B cell (primary cell): ENCODE measurements at regions of chr1 and their contacts with region 1.

Region 1: GRCh38 chr1:26677306-26678115 is 18.3 kb upstream of the ARID1A start:
- DNase-seq: peak; percentile 76
- ATAC-seq: peak; percentile 96
- H3K4me3 ChIP-seq: peak overlapping the region in 4 of 5 experiments; percentile 13 to 31 (median 24)
- H3K4me3 Mint-ChIP-seq: peak overlapping the region; percentile 77
- H3K27ac ChIP-seq: peak overlapping the region in 1 of 2 donors; percentile 12
- H3K27ac Mint-ChIP-seq: peak overlapping the region; percentile 83
- H3K4me1 ChIP-seq: peaks cover 14 to 15% of the 10 kb centered on the region in 2 donors
- H3K4me1 Mint-ChIP-seq: peaks cover 15% of the 10 kb centered on the region
- H3K27me3 ChIP-seq: no peaks in the 10 kb centered on the region
- H3K27me3 Mint-ChIP-seq: no peaks in the 10 kb centered on the region
- CTCF ChIP-seq: peak; percentile 45

Region 2: GRCh38 chr1:26490158-26490557 is 187.4 kb before region 1 on chr1:
- CTCF ChIA-PET with region 1: no interaction called
- POLR2A ChIA-PET with region 1: no interaction called
- intact Hi-C with region 1: no loop called
- DNase-seq: no peak
- ATAC-seq: no peak
- H3K4me3 ChIP-seq: no peak overlapping the region
- H3K4me3 Mint-ChIP-seq: no peak overlapping the region
- H3K27ac ChIP-seq: no peak overlapping the region
- H3K27ac Mint-ChIP-seq: no peak overlapping the region
- H3K4me1 ChIP-seq: no peaks in the 10 kb centered on the region
- H3K4me1 Mint-ChIP-seq: peaks cover 1% of the 10 kb centered on the region
- H3K27me3 ChIP-seq: no peaks in the 10 kb centered on the region
- H3K27me3 Mint-ChIP-seq: no peaks in the 10 kb centered on the region
- CTCF ChIP-seq: no peak

Region 3: DNA sequence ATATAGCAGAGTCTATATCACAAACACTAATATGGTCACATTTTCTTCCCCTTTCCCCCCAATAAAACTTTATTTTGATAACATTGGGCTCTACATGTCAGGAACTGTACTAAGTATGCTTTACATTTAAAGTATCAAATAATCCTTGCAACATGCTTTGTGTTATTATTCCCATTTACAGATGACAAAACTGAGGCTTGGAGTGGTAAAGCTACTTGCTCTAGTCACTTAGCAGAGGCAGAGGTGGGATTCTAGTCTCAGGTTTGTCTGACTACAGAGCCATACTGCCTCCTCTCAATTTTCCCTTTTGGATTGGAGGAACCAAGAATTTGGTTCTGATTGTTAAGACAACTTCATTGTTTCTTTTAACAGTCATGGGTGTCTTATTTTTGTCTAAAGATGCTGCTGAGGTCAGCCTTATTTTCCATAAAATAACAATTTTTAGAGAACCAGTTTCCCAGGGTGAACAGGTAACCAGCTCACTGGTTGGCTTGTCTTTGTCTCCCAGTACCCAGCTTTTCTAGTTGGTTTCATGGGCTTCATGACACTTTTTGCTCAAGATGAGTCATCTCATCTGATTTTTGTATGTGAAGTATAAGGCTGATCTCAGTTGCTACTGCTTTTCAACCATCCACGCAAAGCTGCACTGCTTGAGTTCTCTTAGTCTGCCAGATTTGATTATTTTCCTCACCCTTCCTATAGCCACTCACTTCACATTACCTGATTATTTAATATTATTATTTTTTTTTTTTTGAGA is 62.7 kb before region 1 on chr1:
- CTCF ChIA-PET with region 1: interaction called, 10 read pairs
- POLR2A ChIA-PET with region 1: interaction called, 4 read pairs
- intact Hi-C with region 1: no loop called
- DNase-seq: no peak
- ATAC-seq: no peak
- H3K4me3 ChIP-seq: no peak overlapping the region
- H3K4me3 Mint-ChIP-seq: no peak overlapping the region
- H3K27ac ChIP-seq: no peak overlapping the region
- H3K27ac Mint-ChIP-seq: peak overlapping the region; percentile 32
- H3K4me1 ChIP-seq: peaks cover 16 to 18% of the 10 kb centered on the region in 2 donors
- H3K4me1 Mint-ChIP-seq: peaks cover 18% of the 10 kb centered on the region
- H3K27me3 ChIP-seq: no peaks in the 10 kb centered on the region
- H3K27me3 Mint-ChIP-seq: peaks cover 5% of the 10 kb centered on the region
- CTCF ChIP-seq: no peak

Region 4: GRCh38 chr1:26627954-26628353 is 49.6 kb before region 1 on chr1:
- CTCF ChIA-PET with region 1: interaction called, 12 read pairs
- POLR2A ChIA-PET with region 1: interaction called, 5 read pairs
- intact Hi-C with region 1: no loop called
- DNase-seq: peak; percentile 67
- ATAC-seq: peak; percentile 80
- H3K4me3 ChIP-seq: no peak overlapping the region
- H3K4me3 Mint-ChIP-seq: peak overlapping the region; percentile 32
- H3K27ac ChIP-seq: peak overlapping the region; percentile 25 to 43
- H3K27ac Mint-ChIP-seq: peak overlapping the region; percentile 75
- H3K4me1 ChIP-seq: peaks cover 26 to 34% of the 10 kb centered on the region in 2 donors
- H3K4me1 Mint-ChIP-seq: peaks cover 38% of the 10 kb centered on the region
- H3K27me3 ChIP-seq: no peaks in the 10 kb centered on the region
- H3K27me3 Mint-ChIP-seq: no peaks in the 10 kb centered on the region
- CTCF ChIP-seq: no peak

Region 5: DNA sequence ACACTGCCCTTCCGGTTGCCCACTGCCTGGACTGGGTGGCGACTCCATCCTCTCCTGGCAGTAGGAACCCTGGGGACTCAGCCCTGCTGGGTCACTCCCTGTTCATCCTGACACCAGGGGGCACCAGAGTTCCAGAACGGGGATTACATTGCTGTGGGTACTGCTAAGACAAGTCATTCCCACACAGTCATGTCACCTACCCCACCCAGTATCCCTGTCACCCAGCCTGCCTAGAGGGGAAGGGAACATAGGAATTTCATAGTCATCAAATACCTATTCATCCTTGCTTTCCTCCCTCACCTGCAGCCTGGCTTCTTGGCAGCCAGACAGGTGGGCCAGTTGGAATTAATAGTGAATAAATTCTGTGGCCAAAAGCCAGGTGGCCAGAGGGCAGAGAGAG is 175.6 kb after region 1 on chr1:
- CTCF ChIA-PET with region 1: no interaction called
- POLR2A ChIA-PET with region 1: no interaction called
- intact Hi-C with region 1: no loop called
- DNase-seq: peak; percentile 85
- ATAC-seq: peak; percentile 89
- H3K4me3 ChIP-seq: no peak overlapping the region
- H3K4me3 Mint-ChIP-seq: no peak overlapping the region
- H3K27ac ChIP-seq: no peak overlapping the region
- H3K27ac Mint-ChIP-seq: no peak overlapping the region
- H3K4me1 ChIP-seq: no peaks in the 10 kb centered on the region
- H3K4me1 Mint-ChIP-seq: no peaks in the 10 kb centered on the region
- H3K27me3 ChIP-seq: no peaks in the 10 kb centered on the region
- H3K27me3 Mint-ChIP-seq: no peaks in the 10 kb centered on the region
- CTCF ChIP-seq: peak; percentile 87

Region 6: DNA sequence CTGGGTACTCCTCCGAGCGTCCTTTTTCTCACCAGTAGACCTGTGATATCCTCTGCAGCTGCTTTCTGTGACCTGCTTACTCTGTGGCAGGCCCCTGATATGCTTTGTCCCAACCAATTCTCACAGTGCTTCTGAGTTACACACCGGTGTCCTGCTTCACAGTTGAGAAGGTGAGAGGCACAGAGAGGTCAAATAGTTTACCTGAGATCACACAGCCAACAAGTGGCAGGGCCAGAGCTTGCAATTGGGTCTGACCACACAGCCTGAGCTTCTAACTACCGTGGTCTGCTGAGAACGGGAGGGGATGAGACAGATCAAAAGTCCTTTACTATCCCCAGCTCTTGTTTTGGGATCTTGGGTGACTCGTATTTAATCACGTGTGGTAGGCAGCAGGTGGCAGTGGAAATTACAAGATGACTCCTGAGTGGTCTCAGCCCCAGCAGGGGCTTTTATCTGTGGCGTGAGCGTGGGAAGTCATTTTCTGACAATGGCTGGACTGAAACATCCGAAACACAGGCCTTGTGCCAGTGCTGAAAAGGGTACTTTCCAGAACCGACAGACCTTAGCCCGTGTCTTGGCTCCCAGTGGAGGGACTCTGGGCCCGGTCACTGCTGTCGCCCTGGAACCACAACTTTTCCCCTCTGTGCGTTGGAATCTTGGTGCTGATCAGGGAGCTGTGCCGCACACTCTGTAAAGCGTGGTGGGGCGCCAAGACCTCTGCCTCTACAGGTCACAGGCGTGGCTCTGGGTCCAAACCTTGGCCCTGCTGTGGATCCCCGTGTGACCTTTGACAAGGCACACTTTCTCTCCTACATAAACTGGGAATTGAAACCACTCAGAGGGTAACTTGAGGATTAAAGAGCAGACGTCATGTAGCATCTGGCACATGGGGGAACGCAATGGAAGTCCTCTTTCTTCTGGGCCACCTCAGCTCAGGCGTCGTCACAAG is 1206.8 kb after region 1 on chr1:
- CTCF ChIA-PET with region 1: no interaction called
- POLR2A ChIA-PET with region 1: no interaction called
- intact Hi-C with region 1: no loop called
- DNase-seq: peak; percentile 66
- ATAC-seq: peak; percentile 35
- H3K4me3 ChIP-seq: no peak overlapping the region
- H3K4me3 Mint-ChIP-seq: peak overlapping the region; percentile 71
- H3K27ac ChIP-seq: peak overlapping the region; percentile 61 to 77
- H3K27ac Mint-ChIP-seq: peak overlapping the region; percentile 85
- H3K4me1 ChIP-seq: peaks cover 30 to 55% of the 10 kb centered on the region in 2 donors
- H3K4me1 Mint-ChIP-seq: peaks cover 55% of the 10 kb centered on the region
- H3K27me3 ChIP-seq: no peaks in the 10 kb centered on the region
- H3K27me3 Mint-ChIP-seq: no peaks in the 10 kb centered on the region
- CTCF ChIP-seq: no peak